ENCODE measurements at regions of chr5 and their contacts with region 1.

Region 1: DNA sequence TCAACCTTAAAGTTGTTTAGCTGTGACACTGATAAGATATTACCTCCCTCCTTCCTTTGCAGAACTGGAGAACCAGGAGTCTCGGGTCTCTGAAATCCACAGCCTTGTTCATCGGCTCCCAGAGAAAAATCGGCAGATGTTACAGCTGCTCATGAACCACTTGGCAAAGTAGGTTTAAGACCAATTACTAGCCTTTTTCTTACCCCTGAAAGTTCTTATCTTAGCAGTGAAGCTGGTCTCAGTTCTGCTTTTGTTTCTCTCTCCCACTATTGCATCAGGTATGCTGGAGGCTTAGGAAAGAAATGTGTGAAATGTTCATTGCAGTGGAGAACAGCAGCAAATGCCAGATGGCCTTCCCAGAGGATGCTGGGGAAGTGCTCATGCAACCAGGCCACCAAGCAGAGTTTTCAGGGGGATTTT is 287.4 kb downstream of the ARHGAP26 start:
- DNase-seq: no peak
- ATAC-seq: no peak
- H3K4me3 ChIP-seq: no peak overlapping the region
- H3K27ac ChIP-seq: peak overlapping the region in 5 of 12 donors; percentile 22 to 65 (median 46)
- H3K4me1 ChIP-seq: peaks cover 0 to 63% (median 36%) of the 10 kb centered on the region in 12 donors
- H3K27me3 ChIP-seq: no peaks in the 10 kb centered on the region
- CTCF ChIP-seq: no peak
- POLR2A ChIP-seq: no peak

Region 2: GRCh38 chr5:143016777-143017516 is 40.6 kb before region 1 on chr5:
- intact Hi-C with region 1: loop called in 3 of 10 experiments (anchors 2 to 5 kb)
- DNase-seq: peak in 1 of 5 donors; percentile 42
- ATAC-seq: peak in 1 of 4 donors; percentile 31
- H3K4me3 ChIP-seq: no peak overlapping the region
- H3K27ac ChIP-seq: no peak overlapping the region
- H3K4me1 ChIP-seq: peaks cover 0 to 17% (median 6%) of the 10 kb centered on the region in 12 donors
- H3K27me3 ChIP-seq: no peaks in the 10 kb centered on the region
- CTCF ChIP-seq: peak; percentile 15 to 62 (median 34)
- POLR2A ChIP-seq: no peak